A549 (cell line): ENCODE measurements at regions of chr12 and their contacts with region 1.

Region 1: DNA sequence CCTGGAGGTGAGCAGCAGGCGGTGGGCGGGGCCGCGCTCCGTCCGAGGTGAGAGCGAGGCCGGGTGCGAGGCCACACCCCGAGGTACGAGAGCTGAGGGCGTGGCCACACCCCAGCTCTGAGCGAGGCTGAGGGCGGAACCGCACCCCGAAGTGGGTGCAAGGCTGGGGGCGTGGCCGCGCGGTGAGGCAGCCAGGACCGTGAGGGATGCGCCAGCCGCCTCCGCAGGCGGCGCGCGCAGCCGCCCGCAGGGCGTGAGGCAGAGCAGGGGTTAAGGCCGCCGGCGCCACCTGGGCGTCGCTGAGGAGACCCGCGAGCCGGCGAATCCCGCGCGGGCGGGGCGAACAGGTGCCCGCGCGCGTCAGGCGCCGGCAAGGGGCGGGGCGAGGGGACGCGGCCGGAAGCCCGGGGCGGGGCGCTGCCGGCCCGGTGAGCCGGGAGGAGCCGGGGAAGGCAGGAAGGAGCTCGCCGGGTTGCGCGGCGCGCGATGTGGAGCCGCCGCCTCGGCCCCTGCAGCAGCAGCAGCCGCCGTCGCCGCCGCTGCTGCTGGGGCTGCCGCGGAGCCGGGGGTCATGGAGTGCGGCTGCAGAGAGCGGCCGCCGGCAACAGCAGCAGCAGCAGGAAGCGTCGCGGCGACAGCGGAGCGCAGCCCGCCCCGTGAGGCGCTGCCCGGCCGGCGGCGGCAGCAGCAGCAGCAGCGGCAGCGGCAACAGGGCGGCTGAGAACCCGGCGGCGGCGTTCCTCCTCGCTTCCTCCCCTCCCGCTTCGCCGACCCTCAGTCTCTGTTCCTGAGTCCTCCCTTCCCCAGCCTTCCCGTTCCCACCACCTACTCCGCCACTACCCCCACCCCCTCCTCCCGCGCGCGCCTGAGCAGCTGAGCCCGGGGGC is at the start of gene BICDL1:
- DNase-seq: peak; percentile 82 to 93
- ATAC-seq: peak; percentile 82 to 90
- H3K4me3 ChIP-seq: peak within 1 kb of the TSS; percentile 65
- H3K27ac ChIP-seq: peak within 1 kb of the TSS; percentile 65 to 82
- H3K4me1 ChIP-seq: peaks cover 11% of the 10 kb centered on the region
- CTCF ChIP-seq: no peak
- EP300 ChIP-seq: no peak
- POLR2A ChIP-seq: peak; percentile 32; the same call in 1 of the 2 replicates
- RAD21 ChIP-seq: no peak
- polyA plus RNA-seq, gene BICDL1: 4.5 and 5.8 TPM in 2 replicates

Region 2: DNA sequence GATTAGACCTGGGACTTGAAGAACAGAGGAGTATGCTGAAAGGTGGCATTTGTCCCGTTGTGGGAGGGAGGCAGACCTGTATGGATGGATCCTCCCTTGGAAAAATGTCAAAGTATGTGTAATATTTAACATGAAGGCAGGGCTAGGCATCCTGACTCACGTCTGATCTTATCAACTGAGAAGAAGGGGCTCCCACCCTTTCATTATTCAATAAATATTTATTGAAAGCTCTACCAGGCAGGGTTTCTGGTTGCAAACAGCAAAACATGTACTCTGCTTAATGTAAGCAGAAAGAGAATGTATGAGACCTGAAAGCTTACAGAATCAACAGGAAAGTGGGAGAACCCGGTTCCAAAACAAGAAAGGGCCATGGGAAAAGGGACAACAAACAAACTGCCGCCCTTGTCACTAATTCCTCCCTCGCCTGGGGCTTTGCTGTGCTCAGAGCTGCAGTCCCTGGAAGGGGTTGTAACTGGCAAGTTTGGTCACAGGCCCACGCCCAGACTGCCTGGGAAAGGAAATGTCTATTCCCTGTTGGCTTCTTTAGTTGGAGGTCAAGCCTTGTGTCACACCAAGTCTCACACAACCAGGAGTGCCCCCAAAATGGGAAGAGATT is 90.5 kb after region 1 on chr12:
- CTCF ChIA-PET with region 1: interaction called, 11 read pairs
- POLR2A ChIA-PET with region 1: no interaction called
- DNase-seq: peak; percentile 67
- ATAC-seq: peak; percentile 47 to 78
- H3K4me3 ChIP-seq: no peak overlapping the region; the same call in 2 of the 3 replicates
- H3K27ac ChIP-seq: peak overlapping the region; percentile 70 to 75
- H3K4me1 ChIP-seq: peaks cover 22% of the 10 kb centered on the region
- CTCF ChIP-seq: no peak
- EP300 ChIP-seq: no peak
- POLR2A ChIP-seq: no peak
- RAD21 ChIP-seq: no peak

Region 3: GRCh38 chr12:120086801-120087621 is 98.0 kb after region 1 on chr12:
- CTCF ChIA-PET with region 1: interaction called, 6 read pairs
- POLR2A ChIA-PET with region 1: interaction called, 19 read pairs
- DNase-seq: peak; percentile 99
- ATAC-seq: peak; percentile 94 to 97
- H3K4me3 ChIP-seq: peak overlapping the region; percentile 41
- H3K27ac ChIP-seq: peak overlapping the region; percentile 87 to 89
- H3K4me1 ChIP-seq: peaks cover 17% of the 10 kb centered on the region
- CTCF ChIP-seq: peak; percentile 83
- EP300 ChIP-seq: no peak
- POLR2A ChIP-seq: peak; percentile 68
- RAD21 ChIP-seq: peak; percentile 79 to 81